ENCODE measurements at regions of chr10 and their contacts with region 1.

Region 1: DNA sequence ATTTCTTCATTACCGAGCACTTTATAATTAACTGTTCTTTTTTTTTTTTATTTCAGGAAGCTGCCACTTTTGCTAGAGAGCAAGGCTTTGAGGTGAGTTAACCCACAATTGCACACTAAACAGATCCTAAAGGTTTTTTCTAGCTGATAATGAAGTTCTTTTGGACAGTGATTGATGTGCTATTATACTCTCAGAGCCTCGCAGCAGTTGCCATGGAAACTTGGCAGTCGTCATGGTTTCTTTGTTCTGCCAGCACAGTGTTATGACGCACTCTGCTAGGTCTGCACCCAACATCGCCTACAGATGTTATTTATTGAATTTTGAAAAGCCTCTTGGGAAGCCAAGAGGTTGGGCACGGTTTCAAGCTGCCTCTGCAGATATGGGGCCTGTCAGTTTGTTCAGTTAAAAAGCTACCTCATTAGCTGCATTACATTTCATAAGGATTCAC is 237.2 kb upstream of the KAT6B start:
- DNase-seq: peak; percentile 94
- H3K4me3 Mint-ChIP-seq: no peak overlapping the region
- H3K27ac Mint-ChIP-seq: peak overlapping the region; percentile 80
- H3K4me1 Mint-ChIP-seq: peaks cover 49% of the 10 kb centered on the region
- H3K27me3 Mint-ChIP-seq: no peaks in the 10 kb centered on the region

Region 2: GRCh38 chr10:74176380-74177139 is 412.7 kb before region 1 on chr10:
- intact Hi-C with region 1: loop called (anchors 2 kb)
- DNase-seq: peak; percentile 98
- H3K4me3 Mint-ChIP-seq: peak overlapping the region; percentile 95
- H3K27ac Mint-ChIP-seq: peak overlapping the region; percentile 95
- H3K4me1 Mint-ChIP-seq: peaks cover 31% of the 10 kb centered on the region
- H3K27me3 Mint-ChIP-seq: no peaks in the 10 kb centered on the region

Region 3: DNA sequence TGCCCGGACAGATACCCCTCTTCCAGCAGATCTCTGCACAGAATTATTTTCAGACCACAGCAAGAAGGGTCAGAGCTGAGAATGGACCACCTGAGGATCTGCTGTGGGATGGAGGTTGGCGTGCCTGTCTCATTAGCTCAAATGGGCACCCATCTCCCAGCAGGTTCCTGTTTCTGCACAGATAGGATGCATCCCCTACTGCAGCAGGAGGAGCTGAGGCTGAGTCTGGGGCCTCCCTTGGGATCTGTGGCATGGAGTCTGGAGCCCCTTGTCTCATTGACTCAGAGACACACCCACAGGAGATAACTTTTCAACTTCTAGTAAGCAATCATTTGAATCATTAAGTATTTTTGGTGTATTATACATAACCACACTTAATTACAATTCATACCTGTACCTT is 225.5 kb before region 1 on chr10:
- intact Hi-C with region 1: loop called (anchors 10 kb)
- DNase-seq: no peak
- H3K4me3 Mint-ChIP-seq: no peak overlapping the region
- H3K27ac Mint-ChIP-seq: no peak overlapping the region
- H3K4me1 Mint-ChIP-seq: peaks cover 13% of the 10 kb centered on the region
- H3K27me3 Mint-ChIP-seq: no peaks in the 10 kb centered on the region

Region 4: DNA sequence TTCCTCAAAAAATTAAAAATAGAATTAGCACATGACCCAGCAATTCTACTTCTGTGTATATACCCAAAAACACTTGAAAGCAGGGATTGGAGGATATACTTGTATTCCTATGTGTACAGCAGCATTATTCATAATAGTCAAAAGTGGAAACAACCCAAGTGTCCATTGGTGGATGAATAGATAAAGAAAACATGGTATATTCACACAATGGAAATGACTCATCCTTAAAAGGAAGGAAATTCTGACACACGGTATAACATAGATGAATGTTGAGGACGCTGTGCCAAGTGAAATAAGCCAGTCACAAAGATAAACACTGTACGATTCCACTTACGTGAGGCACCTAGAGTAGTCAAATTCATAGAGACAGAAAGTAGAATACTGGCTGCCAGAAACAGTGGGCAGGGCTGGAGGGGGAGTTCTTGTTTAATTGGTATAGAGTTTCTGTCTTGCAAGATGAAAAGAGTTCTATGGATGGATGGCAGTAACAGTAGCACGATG is 210.5 kb after region 1 on chr10:
- intact Hi-C with region 1: loop called (anchors 2 kb)
- DNase-seq: peak; percentile 64
- H3K4me3 Mint-ChIP-seq: no peak overlapping the region
- H3K27ac Mint-ChIP-seq: peak overlapping the region; percentile 73
- H3K4me1 Mint-ChIP-seq: peaks cover 10% of the 10 kb centered on the region
- H3K27me3 Mint-ChIP-seq: no peaks in the 10 kb centered on the region

Region 5: GRCh38 chr10:74898201-74898976 is 309.1 kb after region 1 on chr10:
- intact Hi-C with region 1: loop called (anchors 1 kb)
- DNase-seq: peak; percentile 79
- H3K4me3 Mint-ChIP-seq: peak overlapping the region; percentile 39
- H3K27ac Mint-ChIP-seq: peak overlapping the region; percentile 78
- H3K4me1 Mint-ChIP-seq: peaks cover 37% of the 10 kb centered on the region
- H3K27me3 Mint-ChIP-seq: no peaks in the 10 kb centered on the region

Region 6: DNA sequence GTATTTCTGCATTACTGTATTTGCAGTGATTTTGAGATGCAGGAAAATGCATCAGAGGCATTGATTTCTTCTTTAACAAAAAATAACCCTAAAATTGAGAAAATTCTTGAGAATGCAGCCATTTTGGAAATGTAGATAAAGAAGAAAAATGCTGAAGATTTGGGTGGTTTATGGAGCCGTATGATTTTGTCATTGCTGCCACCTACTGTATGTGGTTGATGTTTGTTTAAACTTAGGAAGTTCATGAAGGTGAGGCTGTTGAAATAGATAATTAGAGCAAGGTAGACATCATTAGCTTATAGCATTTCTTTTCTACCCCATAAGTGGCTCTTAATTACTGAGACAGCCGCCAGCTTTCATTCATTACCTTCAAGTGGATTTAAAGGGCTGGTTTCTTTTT is 430.1 kb after region 1 on chr10:
- intact Hi-C with region 1: loop called (anchors 5 kb)
- DNase-seq: peak; percentile 74
- H3K4me3 Mint-ChIP-seq: no peak overlapping the region
- H3K27ac Mint-ChIP-seq: no peak overlapping the region
- H3K4me1 Mint-ChIP-seq: peaks cover 25% of the 10 kb centered on the region
- H3K27me3 Mint-ChIP-seq: no peaks in the 10 kb centered on the region

Region 7: GRCh38 chr10:75111367-75111906 is 522.2 kb after region 1 on chr10 and contains the start of gene SAMD8:
- intact Hi-C with region 1: loop called (anchors 5 kb)
- DNase-seq: peak; percentile 99
- H3K4me3 Mint-ChIP-seq: peak within 1 kb of the TSS; percentile 91
- H3K27ac Mint-ChIP-seq: peak within 1 kb of the TSS; percentile 98
- H3K4me1 Mint-ChIP-seq: peaks cover 33% of the 10 kb centered on the region
- H3K27me3 Mint-ChIP-seq: no peaks in the 10 kb centered on the region
- total RNA-seq, gene SAMD8: 17.7 and 17.9 TPM in 2 replicates

Measured in activated CD4-positive, alpha-beta T cell treated with anti-CD3 and anti-CD28 coated beads, Interleukin-2, amount 10 ng/mL, durations not matched to agents 24 days and 14 days (primary cell).